ENCODE measurements at regions of chr1 and their contacts with region 1.

Region 1: DNA sequence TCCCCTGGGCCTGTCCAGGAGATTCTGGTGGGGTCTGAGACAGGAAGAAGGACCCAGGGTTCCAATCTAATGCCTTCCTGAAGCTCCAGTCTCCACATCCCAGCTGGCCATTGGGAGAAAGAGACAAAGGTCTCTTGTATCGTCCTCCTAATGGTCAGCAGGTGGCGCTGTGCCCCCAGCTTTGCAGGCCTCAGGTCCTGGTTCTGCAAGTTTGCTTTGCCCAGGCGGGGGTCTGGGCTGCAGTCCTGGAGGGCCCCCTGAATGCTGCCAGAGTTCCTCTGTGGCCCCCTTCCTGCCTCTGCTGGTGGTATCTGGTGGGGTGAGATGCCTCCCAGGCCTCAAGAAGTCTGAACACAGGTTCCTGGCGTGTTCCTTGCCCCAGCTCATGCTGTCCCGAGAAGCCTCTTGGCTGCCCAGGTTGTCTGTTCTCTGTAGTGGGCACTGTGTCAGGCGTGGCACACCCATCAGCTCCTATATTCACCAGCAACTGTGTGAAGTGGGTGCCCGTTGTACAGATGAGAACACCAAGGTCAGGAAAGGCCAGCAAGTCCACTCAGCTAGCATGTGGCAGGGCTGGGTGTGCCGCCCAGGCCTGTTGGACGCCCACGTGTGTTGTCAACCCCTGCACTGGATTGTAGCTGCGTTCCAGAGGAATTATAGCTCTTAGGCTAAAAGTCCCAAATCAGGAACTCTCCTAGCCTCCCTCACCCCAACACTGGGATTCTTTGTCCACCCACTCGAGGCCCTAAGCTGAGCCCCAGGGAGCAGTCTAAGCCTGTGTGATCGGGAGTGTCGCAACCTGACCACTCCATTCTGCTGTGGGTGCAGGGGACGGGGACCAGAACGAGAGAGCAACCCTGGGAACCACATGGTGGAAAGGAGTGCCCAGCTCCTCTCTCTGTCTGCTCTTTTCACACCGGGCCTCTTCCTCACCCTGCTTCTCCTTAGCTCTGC is 33.9 kb upstream of the CSF3R start:
- DNase-seq: peak; percentile 66
- ATAC-seq: peak; percentile 72
- H3K4me3 Mint-ChIP-seq: no peak overlapping the region
- H3K27ac Mint-ChIP-seq: no peak overlapping the region
- H3K4me1 Mint-ChIP-seq: no peaks in the 10 kb centered on the region
- H3K27me3 Mint-ChIP-seq: no peaks in the 10 kb centered on the region
- CTCF ChIP-seq: peak; percentile 93

Region 2: DNA sequence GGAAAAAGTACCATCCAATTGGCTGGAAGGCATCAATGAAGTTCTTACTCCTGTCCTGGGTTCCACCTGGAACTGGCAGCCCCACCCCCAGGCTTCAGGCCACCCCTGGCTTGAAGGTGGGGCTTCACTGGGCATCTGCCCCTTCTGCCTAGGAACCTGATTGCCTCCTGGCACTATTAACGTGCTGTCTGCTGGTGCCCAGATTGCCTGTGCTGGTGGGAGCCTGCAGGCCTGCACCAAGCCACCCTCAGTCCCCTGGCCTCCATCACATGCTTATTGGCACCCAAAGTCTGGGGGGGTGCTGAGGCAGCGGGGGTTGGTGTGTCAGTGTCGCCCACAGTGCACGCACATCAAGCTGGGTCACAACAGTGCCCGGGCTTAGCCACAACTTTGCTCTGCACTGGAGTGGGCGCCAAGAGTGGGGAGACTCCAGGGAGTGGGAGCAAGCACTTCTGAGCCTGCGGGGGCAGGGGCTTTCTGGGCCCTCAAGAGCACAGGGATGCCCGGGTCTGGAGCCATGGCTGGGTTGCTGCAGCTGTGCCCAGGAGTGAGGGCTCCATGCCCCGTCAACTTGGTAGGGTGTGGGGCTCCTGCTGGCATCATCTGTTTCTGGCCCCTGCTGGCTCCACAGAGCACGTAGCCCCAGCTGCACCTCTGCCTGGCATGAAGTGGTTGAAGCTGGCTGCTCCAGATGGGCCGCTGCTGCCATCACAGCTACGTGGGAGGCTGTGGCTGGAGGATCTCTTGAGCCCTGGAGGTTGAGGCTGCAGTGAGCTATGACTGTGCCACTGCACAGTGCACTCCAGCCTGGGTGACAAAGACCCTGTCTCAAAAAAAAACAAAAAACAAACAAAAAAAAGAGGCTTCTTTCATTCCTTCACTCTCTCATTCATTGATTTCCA is 114.8 kb before region 1 on chr1:
- CTCF ChIA-PET with region 1: no interaction called
- POLR2A ChIA-PET with region 1: no interaction called
- intact Hi-C with region 1: no loop called
- DNase-seq: no peak
- ATAC-seq: no peak
- H3K4me3 Mint-ChIP-seq: peak overlapping the region; percentile 59
- H3K27ac Mint-ChIP-seq: peak overlapping the region; percentile 69
- H3K4me1 Mint-ChIP-seq: peaks cover 20% of the 10 kb centered on the region
- H3K27me3 Mint-ChIP-seq: no peaks in the 10 kb centered on the region
- CTCF ChIP-seq: no peak

Region 3: DNA sequence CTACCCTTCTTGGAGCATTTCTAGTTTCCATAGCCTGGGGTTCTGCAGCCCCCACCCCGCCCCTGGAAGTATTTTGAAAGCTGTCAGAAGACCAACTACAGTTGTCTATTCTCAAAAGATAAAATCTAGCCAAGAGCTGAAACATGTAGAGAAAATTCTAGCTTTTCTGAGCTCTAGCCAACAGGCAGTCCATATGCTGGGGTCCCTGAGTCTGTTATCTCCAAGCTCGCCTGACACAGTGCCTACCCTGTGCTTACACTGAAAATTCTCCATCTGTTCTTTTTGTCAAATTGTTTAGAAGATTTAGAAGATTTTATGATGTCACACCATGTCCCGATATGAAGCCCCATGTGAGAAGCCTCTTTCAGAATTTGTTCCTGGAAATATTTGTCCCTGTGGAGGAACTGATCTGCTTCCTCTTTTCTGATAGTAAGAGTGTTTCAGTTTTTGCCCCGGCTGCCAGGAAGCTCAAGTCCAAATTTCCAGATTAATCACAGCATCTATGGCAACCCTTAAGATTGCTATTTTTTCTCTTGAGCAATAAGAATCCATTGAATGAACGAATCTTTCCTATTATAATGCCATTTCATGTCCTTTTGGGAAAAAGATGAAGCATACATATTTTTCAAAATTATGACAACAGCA is 10.3 kb before region 1 on chr1:
- CTCF ChIA-PET with region 1: interaction called, 34 read pairs
- POLR2A ChIA-PET with region 1: no interaction called
- intact Hi-C with region 1: no loop called
- DNase-seq: no peak
- ATAC-seq: no peak
- H3K4me3 Mint-ChIP-seq: no peak overlapping the region
- H3K27ac Mint-ChIP-seq: no peak overlapping the region
- H3K4me1 Mint-ChIP-seq: no peaks in the 10 kb centered on the region
- H3K27me3 Mint-ChIP-seq: peaks cover 23% of the 10 kb centered on the region
- CTCF ChIP-seq: no peak

Region 4: GRCh38 chr1:36542962-36543515 is 26.4 kb after region 1 on chr1:
- CTCF ChIA-PET with region 1: interaction called, 21 read pairs
- POLR2A ChIA-PET with region 1: no interaction called
- intact Hi-C with region 1: no loop called
- DNase-seq: no peak
- ATAC-seq: no peak
- H3K4me3 Mint-ChIP-seq: no peak overlapping the region
- H3K27ac Mint-ChIP-seq: no peak overlapping the region
- H3K4me1 Mint-ChIP-seq: no peaks in the 10 kb centered on the region
- H3K27me3 Mint-ChIP-seq: peaks cover 6% of the 10 kb centered on the region
- CTCF ChIP-seq: no peak

Measured in activated CD8-positive, alpha-beta T cell treated with anti-CD3 and anti-CD28 coated beads for 36 hours (primary cell).